Mammary epithelial cell (primary cell): ENCODE measurements at regions of chr17 and their contacts with region 1.

Region 1: DNA sequence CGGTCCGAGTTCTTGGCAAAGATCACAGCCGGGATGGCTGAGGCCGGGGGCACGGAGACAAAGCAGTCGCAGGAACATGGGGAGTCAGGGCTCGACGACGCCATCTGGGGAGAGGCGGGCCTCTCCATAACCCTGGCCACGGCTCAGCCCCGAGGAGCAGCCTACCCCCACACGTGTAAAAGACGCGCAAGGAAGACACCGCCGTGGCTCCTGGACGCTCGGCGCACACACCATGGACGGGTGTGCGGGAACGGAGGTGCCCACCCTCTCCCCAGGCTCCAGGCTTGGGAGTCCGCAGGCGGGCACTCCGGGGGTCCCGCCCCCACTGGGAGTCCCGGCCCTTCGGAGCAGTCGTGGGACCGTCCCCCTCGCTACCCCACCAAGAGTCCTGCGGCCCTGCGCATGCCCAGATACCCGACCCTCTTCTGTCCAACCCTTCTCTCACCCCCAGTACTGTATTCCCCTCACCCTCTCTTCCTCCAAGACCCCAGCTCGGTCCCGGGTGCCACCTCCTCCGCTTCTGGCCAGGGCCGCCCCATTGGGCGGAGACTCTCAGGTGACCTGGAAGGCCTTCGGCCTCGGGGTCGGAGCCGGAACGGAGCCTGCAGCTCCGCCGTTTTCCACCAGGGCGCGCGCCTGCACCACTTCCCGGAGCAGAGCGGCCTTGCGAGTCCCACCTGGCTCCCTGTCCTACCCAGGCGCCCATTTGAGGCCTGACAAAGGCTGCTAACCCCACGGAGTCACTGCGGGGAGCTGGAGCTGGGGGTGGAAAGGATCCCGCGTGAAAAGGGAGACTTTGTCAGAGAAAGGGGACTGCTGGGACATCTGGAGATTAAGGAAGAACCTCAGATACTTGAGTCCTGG is at the start of gene SCRN2:
- DNase-seq: peak; percentile 82
- H3K4me3 ChIP-seq: peak within 1 kb of the TSS; percentile 72 to 76 (median 74)
- H3K27ac ChIP-seq: peak within 1 kb of the TSS; percentile 24
- H3K4me1 ChIP-seq: peaks cover 58% of the 10 kb centered on the region
- H3K27me3 ChIP-seq: no peaks in the 10 kb centered on the region
- CTCF ChIP-seq: peak; percentile 85 to 99
- total RNA-seq, gene SCRN2: 29.0 to 36.3 TPM

Region 2: DNA sequence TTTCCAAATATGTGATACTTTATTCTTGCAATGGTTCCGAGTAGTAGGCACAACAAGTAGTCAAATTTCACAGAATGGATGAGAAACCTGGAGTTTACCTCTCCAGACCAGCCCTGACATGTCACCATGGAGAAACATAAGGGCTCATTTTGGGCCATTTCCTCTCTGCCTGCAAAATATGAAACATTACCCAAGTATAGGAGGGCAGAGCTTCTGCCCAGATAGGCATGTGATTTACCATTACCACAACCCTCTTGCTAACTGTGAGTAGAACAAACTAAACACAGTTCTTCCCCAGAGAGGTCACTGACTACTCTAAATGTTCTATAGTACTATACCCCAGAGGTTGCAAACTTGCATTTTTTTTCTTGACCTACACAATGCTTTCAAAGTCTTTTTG is 207.0 kb before region 1 on chr17:
- CTCF ChIA-PET with region 1: no interaction called
- dilution Hi-C with region 1: no loop called
- in situ Hi-C with region 1: no loop called
- intact Hi-C with region 1: no loop called
- DNase-seq: peak; percentile 68
- H3K4me3 ChIP-seq: no peak overlapping the region
- H3K27ac ChIP-seq: no peak overlapping the region
- H3K4me1 ChIP-seq: peaks cover 9% of the 10 kb centered on the region
- H3K27me3 ChIP-seq: no peaks in the 10 kb centered on the region
- CTCF ChIP-seq: no peak

Region 3: DNA sequence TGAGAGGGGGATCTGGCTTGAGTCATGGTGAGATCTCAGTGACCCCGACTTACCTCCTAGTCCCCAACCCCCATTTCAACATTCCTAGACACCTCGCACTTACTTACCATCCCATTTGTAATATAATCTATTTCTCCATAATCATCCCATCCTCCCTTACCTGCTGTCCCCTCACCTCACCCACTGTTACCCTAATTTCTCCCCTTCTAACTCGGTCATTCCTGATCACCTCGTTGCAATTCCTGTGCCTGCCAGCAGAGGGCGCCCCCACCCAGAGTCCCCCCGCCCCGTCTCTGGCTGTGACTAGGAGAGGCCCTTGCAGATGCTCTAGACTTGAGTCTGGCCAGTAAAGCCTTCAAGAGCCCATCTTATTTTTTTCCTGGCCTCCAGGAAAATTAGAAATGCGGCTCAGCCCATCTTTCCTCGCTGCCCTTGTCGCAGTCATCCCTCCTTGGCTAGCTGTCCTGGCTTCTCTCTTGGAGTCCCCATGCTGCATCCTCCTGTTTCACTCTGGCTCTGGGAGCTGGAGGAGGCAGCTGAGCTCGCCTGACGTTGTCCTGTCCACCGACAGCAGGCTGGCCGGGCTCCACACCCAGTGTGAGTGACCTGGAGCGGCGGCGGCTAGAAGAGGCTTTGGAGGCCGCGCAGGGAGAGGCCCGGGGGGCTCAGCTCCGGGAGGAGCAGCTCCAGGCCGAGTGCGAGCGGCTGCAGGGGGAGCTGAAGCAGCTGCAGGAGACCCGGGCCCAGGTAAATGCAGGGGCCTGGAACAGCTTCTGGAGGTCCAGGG is 142.0 kb before region 1 on chr17:
- CTCF ChIA-PET with region 1: interaction called, 25 read pairs
- dilution Hi-C with region 1: no loop called
- in situ Hi-C with region 1: no loop called
- intact Hi-C with region 1: no loop called
- DNase-seq: peak; percentile 33
- H3K4me3 ChIP-seq: no peak overlapping the region
- H3K27ac ChIP-seq: no peak overlapping the region
- H3K4me1 ChIP-seq: peaks cover 9% of the 10 kb centered on the region
- H3K27me3 ChIP-seq: no peaks in the 10 kb centered on the region
- CTCF ChIP-seq: peak; percentile 62 to 88

Region 4: GRCh38 chr17:47889734-47890529 is 49.0 kb after region 1 on chr17:
- CTCF ChIA-PET with region 1: interaction called, 9 read pairs
- dilution Hi-C with region 1: loop called (anchors 5 kb)
- in situ Hi-C with region 1: loop called (anchors 5 kb)
- intact Hi-C with region 1: loop called (anchors 1 kb)
- DNase-seq: peak; percentile 66
- H3K4me3 ChIP-seq: no peak overlapping the region
- H3K27ac ChIP-seq: no peak overlapping the region
- H3K4me1 ChIP-seq: peaks cover 25% of the 10 kb centered on the region
- H3K27me3 ChIP-seq: no peaks in the 10 kb centered on the region
- CTCF ChIP-seq: peak; percentile 82 to 97

Region 5: GRCh38 chr17:47918006-47918405 is 77.0 kb after region 1 on chr17:
- CTCF ChIA-PET with region 1: no interaction called
- dilution Hi-C with region 1: no loop called
- in situ Hi-C with region 1: no loop called
- intact Hi-C with region 1: no loop called
- DNase-seq: no peak
- H3K4me3 ChIP-seq: no peak overlapping the region
- H3K27ac ChIP-seq: no peak overlapping the region
- H3K4me1 ChIP-seq: peaks cover 30% of the 10 kb centered on the region
- H3K27me3 ChIP-seq: no peaks in the 10 kb centered on the region
- CTCF ChIP-seq: no peak

Region 6: DNA sequence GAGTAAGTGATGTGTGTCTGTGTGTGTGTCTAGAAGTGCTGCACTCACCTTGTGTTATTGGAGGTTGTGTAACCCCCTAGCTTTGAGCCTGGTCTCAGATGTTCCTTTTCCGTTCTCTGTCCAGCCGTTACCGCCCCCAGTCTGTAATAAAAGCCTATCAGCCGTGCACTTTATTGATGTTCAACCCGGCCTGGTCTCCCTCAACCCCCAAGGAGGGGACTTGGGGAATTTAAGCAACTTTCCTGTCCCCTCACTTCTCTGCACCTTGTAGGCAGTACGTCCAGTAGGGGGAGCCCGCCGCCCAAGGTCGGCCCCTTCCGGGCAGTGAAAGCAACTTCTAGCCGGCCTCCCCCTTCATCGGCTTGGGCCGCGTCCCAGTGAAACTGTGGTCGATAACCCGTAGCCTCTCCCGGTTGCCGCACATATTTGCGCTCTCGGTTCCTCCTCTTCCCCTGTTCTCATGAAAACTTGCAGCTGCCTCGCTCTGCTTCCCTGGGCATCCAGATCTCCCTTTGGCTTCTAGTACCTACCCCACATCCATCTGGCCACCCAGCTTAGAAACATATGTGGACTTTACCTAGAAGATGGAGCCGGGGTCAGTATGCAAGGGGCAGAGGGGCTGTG is 108.3 kb after region 1 on chr17:
- CTCF ChIA-PET with region 1: interaction called, 3 read pairs
- dilution Hi-C with region 1: no loop called
- in situ Hi-C with region 1: loop called in 1 of 2 experiments (anchors 10 kb)
- intact Hi-C with region 1: loop called (anchors 1 kb)
- DNase-seq: peak; percentile 86
- H3K4me3 ChIP-seq: peak overlapping the region in 1 of 3 experiments; percentile 8
- H3K27ac ChIP-seq: peak overlapping the region; percentile 85
- H3K4me1 ChIP-seq: peaks cover 32% of the 10 kb centered on the region
- H3K27me3 ChIP-seq: no peaks in the 10 kb centered on the region
- CTCF ChIP-seq: peak; percentile 83 to 93

Region 7: DNA sequence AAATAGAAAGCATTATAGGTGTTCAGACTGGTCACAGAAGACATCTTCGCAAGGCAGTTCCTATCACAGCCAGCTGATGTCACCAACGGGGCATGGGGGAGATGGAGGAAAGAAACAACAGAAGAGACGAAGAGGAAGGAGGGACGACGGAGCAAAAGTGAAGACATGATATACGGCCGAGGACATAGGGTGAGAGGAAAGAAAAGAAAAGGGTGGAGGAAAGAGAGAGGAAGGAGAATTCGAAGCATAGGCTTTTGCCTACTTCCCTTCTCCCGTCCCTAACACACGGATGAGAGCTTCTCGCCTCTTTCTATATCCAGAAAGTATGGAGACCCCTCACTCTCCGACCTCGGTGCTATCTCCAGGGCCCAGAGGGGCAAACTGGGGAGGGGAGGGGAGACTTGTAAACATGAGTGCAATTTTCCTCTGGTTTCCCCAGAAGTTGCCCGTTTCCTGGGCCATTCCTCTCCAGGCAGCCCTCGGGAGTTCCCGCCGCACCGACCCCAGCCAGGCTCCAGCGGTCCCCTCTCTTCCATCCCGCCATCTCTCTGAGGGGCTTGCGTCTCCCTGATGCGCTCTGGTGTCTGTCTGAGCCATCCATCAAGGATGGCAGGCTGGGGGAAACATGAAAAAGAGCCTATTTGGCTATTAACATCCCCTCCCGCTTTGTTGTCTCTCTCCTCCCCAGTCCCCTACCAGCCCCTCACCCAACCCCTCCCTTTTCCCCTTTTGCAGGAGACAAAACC is 170.6 kb after region 1 on chr17:
- CTCF ChIA-PET with region 1: no interaction called
- dilution Hi-C with region 1: no loop called
- in situ Hi-C with region 1: loop called in 1 of 2 experiments (anchors 5 kb)
- intact Hi-C with region 1: no loop called
- DNase-seq: peak; percentile 39
- H3K4me3 ChIP-seq: peak overlapping the region; percentile 18 to 30 (median 22)
- H3K27ac ChIP-seq: no peak overlapping the region
- H3K4me1 ChIP-seq: peaks cover 8% of the 10 kb centered on the region
- H3K27me3 ChIP-seq: no peaks in the 10 kb centered on the region
- CTCF ChIP-seq: peak; percentile 44 to 70